ENCODE measurements at regions of chr4 and their contacts with region 1.

Region 1: GRCh38 chr4:183182873-183183725 is 84.0 kb downstream of the WWC2 start:
- DNase-seq: no peak
- H3K4me3 Mint-ChIP-seq: no peak overlapping the region
- H3K27ac Mint-ChIP-seq: no peak overlapping the region
- H3K4me1 Mint-ChIP-seq: peaks cover 13% of the 10 kb centered on the region
- H3K27me3 Mint-ChIP-seq: peaks cover 33% of the 10 kb centered on the region

Region 2: DNA sequence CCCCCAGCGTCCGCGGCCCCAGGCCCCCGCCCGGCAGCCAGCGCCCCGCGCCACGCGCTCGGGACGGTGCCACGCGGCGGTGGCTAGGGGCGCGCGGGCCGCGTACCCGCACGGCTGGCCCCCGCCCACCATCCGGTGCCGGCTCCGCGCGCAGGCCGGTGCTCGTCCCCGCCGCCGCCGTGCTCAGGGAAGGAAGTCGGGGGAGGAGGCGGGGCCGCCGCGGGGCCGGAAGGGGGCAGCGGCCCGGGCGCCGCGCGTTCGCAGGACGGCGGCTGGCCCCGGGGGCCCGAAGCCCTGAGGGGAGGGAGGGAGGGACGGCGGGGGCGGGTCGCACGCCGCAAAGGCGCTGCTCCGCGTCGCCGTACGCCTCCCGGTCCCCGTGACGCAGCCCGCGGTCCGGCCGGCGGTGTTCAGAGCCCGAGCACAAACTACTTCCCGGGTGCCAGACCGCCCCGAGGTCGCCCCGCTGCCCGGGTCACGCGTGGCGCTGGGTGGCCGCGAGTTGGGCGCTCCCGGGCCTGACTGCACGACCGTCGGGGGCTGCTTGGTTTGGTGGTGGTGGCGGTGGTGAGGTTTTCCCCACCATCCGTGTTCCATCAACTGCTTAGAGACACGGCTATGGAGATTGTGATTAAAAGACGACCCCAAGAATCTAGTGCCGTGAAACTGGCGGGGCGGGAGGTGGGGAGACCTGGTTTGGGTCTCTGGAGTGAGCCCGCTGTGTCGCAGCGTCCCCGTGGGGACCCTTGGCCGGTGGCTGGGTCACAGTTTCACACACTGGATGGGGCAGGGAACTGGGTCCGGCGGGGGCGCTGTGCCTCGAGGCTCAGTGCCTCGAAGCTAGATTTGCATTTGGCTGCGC is 265.7 kb before region 1 on chr4 and contains the start of gene DCTD:
- intact Hi-C with region 1: loop called (anchors 2 kb)
- DNase-seq: peak; percentile 78
- H3K4me3 Mint-ChIP-seq: peak within 1 kb of the TSS; percentile 92
- H3K27ac Mint-ChIP-seq: peak within 1 kb of the TSS; percentile 97
- H3K4me1 Mint-ChIP-seq: peaks cover 50% of the 10 kb centered on the region
- H3K27me3 Mint-ChIP-seq: peaks cover 10% of the 10 kb centered on the region
- total RNA-seq, gene DCTD: 122 and 131 TPM in 2 replicates

Region 3: DNA sequence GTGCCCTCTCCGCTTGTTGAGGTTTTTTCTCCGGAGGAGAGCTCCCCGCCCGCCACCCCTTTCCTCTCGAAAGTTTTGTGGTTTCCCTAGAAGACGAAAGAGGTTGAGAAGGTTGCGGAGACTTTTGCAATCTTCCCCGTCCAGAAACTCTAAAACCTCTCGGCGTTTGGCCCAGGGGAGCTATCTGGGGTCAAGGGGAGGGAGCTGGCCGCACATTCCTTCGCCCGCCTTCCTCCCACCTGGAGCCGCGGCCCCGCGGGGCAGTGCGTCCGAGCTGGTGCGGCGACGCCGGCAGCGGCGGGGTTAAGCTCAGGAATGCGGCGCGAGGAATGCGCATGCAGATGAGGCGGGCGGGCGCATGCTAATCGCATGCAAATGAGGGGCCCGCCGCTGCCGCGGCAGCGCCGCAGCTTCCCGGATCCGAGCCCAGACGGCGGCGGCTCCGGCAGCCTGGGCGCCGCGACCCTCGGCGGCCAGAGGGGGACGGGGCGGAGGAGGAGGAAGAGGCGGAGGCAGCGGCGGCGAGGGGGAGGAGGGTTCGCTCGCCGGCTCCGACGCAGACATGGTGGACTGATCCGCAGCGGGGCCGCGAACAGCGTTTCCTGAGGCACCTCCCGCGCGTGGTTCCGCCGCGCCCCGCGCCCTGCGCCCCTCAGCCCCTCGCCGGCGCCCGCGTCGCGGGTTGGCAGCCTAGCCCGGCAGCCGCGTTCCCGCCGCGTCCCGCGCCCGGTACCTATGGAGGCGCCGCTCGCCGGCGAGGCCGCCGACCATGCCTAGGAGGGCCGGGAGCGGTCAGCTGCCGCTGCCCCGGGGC is 84.2 kb before region 1 on chr4 and contains the start of gene WWC2:
- intact Hi-C with region 1: loop called (anchors 2 kb)
- DNase-seq: peak; percentile 44
- H3K4me3 Mint-ChIP-seq: peak within 1 kb of the TSS; percentile 58
- H3K27ac Mint-ChIP-seq: no peak within 1 kb of the TSS
- H3K4me1 Mint-ChIP-seq: no peaks in the 10 kb centered on the region
- H3K27me3 Mint-ChIP-seq: peaks cover 68% of the 10 kb centered on the region
- total RNA-seq, gene WWC2: 0.39 and 0.75 TPM in 2 replicates

Region 4: DNA sequence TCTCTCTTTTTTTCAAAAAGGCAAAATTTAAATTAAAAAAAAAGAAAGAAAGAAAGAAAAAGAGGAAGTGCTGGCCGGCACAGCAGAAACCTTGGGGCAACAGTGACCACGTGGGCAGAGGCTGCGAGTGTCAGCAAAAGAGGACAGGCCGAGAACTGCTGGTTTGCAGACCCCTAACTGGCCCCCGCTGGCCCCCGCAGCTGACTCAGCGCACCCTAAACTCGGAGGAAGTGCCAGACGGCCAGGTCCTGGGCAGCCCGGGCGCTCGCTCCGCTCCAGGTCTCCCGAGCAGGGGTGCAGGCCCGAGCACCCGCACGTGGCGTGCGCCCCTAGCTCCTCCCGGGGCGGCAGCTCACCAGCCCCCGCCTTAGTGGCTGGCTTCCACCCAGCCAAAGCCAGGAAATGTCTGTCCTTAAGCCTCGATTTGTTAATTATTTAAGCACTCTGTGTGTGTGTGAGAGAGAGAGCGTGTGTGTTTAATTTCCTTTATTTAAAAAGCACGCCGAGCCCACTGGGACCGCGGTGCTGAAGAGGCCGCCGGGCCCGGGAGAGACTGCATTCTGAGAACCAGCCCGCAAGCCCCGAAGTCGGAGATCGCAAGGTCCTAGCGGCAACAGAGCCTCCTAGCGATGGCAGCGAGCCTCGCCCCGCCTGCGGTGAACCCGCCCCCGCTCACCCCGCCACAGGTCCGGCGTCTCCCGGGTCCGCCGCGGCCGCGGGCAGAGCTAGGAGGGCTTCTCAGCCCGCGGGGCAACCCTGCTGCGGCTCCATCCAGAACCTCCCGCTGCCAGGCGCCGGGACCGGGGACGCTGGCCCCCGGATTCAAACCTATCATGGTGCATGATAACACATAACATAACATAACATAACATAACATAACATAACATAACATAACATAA is 215.4 kb after region 1 on chr4:
- intact Hi-C with region 1: loop called (anchors 10 kb)
- DNase-seq: peak; percentile 46
- H3K4me3 Mint-ChIP-seq: peak overlapping the region; percentile 85
- H3K27ac Mint-ChIP-seq: peak overlapping the region; percentile 79
- H3K4me1 Mint-ChIP-seq: peaks cover 20% of the 10 kb centered on the region
- H3K27me3 Mint-ChIP-seq: peaks cover 36% of the 10 kb centered on the region